Naive thymus-derived CD4-positive, alpha-beta T cell (primary cell): ENCODE measurements at regions of chr5 and their contacts with region 1.

Region 1: DNA sequence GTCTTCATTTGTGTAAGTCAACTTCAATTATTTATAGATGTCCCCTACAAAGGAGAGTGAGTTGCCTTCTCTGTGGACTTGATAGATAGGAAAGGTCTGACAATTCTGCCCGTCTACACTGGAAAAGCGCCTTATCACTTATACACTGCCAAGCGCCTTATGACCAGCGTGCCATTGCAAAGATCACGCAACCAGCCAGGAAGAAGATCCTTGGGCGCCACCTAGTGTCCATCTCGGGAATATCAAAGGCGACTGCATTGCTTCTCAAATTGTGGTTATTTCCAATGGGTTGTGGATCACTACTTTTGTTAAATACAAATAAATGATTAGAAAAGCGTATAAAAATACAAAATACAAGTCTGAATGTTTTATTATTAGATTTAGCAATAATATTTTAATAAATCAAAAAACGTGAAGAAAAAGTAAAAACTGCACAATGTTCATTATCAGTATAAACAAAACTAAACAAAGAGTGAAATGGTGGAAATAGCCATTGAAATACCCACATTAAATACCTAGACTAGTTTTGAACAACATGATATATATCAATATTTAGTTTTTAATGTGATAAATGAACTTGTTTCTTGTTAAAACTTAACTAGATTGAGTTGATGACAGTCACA is 27.8 kb downstream of the SUB1 start:
- DNase-seq: peak; percentile 55 to 84 (median 75)
- ATAC-seq: peak; percentile 92
- H3K4me3 ChIP-seq: no peak overlapping the region
- H3K4me3 Mint-ChIP-seq: no peak overlapping the region
- H3K27ac ChIP-seq: no peak overlapping the region
- H3K27ac Mint-ChIP-seq: peak overlapping the region in 2 of 9 donors; percentile 6 to 20
- H3K4me1 ChIP-seq: no peaks in the 10 kb centered on the region
- H3K4me1 Mint-ChIP-seq: peaks cover 3 to 14% (median 6%) of the 10 kb centered on the region in 7 donors
- H3K27me3 ChIP-seq: no peaks in the 10 kb centered on the region
- H3K27me3 Mint-ChIP-seq: no peaks in the 10 kb centered on the region

Region 2: GRCh38 chr5:32153723-32154122 is 459.4 kb before region 1 on chr5:
- CTCF ChIA-PET with region 1: no interaction called
- POLR2A ChIA-PET with region 1: no interaction called
- intact Hi-C with region 1: loop called in 1 of 2 experiments (anchors 10 kb)
- DNase-seq: no peak
- ATAC-seq: no peak
- H3K4me3 ChIP-seq: no peak overlapping the region
- H3K4me3 Mint-ChIP-seq: peak overlapping the region in 4 of 10 donors; percentile 17 to 45 (median 30)
- H3K27ac ChIP-seq: no peak overlapping the region
- H3K27ac Mint-ChIP-seq: no peak overlapping the region
- H3K4me1 ChIP-seq: peaks cover 12 to 15% of the 10 kb centered on the region in 2 donors
- H3K4me1 Mint-ChIP-seq: peaks cover 28 to 59% (median 49%) of the 10 kb centered on the region in 7 donors
- H3K27me3 ChIP-seq: no peaks in the 10 kb centered on the region
- H3K27me3 Mint-ChIP-seq: no peaks in the 10 kb centered on the region

Region 3: GRCh38 chr5:32232441-32233219 is 380.5 kb before region 1 on chr5:
- CTCF ChIA-PET with region 1: interaction called, 7 read pairs
- POLR2A ChIA-PET with region 1: no interaction called
- intact Hi-C with region 1: loop called (anchors 1 kb)
- DNase-seq: peak; percentile 45 to 73 (median 64)
- ATAC-seq: peak; percentile 88
- H3K4me3 ChIP-seq: no peak overlapping the region
- H3K4me3 Mint-ChIP-seq: no peak overlapping the region
- H3K27ac ChIP-seq: no peak overlapping the region
- H3K27ac Mint-ChIP-seq: peak overlapping the region; percentile 45 to 71 (median 62)
- H3K4me1 ChIP-seq: no peaks in the 10 kb centered on the region
- H3K4me1 Mint-ChIP-seq: peaks cover 0 to 12% (median 7%) of the 10 kb centered on the region in 7 donors
- H3K27me3 ChIP-seq: no peaks in the 10 kb centered on the region
- H3K27me3 Mint-ChIP-seq: no peaks in the 10 kb centered on the region

Region 4: DNA sequence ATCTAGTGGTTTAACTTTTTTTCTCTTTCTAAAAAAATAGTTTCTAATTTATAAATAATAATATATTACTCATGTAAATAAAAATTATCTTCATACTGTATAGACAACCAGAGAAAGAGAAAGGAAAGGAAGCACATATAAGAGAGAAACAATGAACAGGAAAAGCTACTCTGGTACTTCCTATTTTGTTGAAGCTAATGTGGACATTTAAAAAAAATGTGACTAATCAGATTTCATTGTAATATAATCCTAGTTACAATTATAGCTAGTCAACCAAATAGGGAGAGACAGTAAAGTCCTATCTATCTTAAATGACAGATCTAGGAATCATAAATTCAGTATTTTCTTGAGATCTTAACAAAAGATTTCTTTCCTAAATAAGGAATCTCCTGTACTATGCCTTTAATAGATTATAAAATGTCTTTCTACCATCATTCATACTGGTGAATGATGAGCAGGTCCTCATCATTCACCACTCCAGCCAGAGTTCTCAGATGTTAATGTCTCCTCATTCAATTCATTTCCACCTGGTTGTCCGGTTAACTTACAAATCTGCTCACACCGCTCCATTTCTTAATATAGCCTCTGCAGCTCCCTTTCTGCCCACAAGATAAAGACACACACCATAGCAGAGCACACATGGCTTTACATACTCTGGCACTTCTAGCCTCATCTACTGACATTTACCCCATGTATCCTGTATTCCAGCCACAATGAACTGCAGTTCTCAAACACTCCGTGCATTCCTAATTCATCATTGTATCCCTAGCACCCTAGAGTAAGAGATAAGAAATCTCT is 199.5 kb before region 1 on chr5:
- CTCF ChIA-PET with region 1: no interaction called
- POLR2A ChIA-PET with region 1: interaction called, 3 read pairs
- intact Hi-C with region 1: loop called in 1 of 2 experiments (anchors 5 kb)
- DNase-seq: no peak
- ATAC-seq: no peak
- H3K4me3 ChIP-seq: no peak overlapping the region
- H3K4me3 Mint-ChIP-seq: no peak overlapping the region
- H3K27ac ChIP-seq: no peak overlapping the region
- H3K27ac Mint-ChIP-seq: peak overlapping the region in 6 of 9 donors; percentile 5 to 53 (median 18)
- H3K4me1 ChIP-seq: no peaks in the 10 kb centered on the region
- H3K4me1 Mint-ChIP-seq: peaks cover under 1 to 32% (median 12%) of the 10 kb centered on the region in 7 donors
- H3K27me3 ChIP-seq: no peaks in the 10 kb centered on the region
- H3K27me3 Mint-ChIP-seq: no peaks in the 10 kb centered on the region

Region 5: GRCh38 chr5:32489791-32490582 is 123.2 kb before region 1 on chr5:
- CTCF ChIA-PET with region 1: interaction called, 39 read pairs
- POLR2A ChIA-PET with region 1: no interaction called
- intact Hi-C with region 1: loop called (anchors 1 kb)
- DNase-seq: peak; percentile 40 to 72 (median 64)
- ATAC-seq: peak; percentile 82
- H3K4me3 ChIP-seq: no peak overlapping the region
- H3K4me3 Mint-ChIP-seq: no peak overlapping the region
- H3K27ac ChIP-seq: no peak overlapping the region
- H3K27ac Mint-ChIP-seq: peak overlapping the region in 4 of 9 donors; percentile 11 to 56 (median 31)
- H3K4me1 ChIP-seq: no peaks in the 10 kb centered on the region
- H3K4me1 Mint-ChIP-seq: peaks cover 0 to 11% (median 7%) of the 10 kb centered on the region in 7 donors
- H3K27me3 ChIP-seq: no peaks in the 10 kb centered on the region
- H3K27me3 Mint-ChIP-seq: no peaks in the 10 kb centered on the region

Region 6: DNA sequence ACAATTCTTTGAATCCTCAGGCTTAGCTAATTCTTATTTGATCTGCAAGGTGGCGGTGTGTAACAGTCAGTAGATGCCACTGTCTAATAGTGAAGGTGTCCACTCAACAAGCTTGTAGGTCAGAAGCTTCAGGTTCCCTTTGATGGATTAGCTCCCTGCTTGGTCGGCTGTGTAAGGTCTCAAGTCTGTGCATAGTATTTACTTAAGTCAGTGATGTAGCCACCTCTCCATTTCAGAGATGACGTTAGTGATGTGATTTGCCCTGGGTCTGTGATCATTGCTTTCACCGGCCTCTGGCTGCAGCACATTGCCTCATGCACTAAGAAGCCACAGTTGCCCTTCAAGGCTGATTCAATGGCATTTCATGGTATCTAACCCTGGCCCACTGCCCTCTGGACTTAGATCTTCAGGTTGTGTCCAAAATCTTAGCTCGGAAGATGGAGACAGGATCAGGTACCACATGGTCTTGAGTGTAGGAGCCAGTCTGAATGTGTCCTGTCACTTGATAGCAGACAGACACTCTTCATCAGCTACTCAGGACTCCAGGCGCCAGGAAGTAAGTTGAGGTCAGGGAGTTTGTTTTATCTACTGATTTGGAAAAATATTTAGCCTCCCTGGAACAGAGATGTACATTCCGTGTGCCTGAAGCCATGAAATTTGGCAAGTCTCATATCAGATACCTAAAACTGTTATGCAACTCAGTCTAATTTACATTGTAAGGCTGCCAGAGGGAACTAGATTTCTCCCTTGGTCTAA is 15.1 kb after region 1 on chr5:
- CTCF ChIA-PET with region 1: no interaction called
- POLR2A ChIA-PET with region 1: no interaction called
- intact Hi-C with region 1: no loop called
- DNase-seq: no peak
- ATAC-seq: no peak
- H3K4me3 ChIP-seq: no peak overlapping the region
- H3K4me3 Mint-ChIP-seq: no peak overlapping the region
- H3K27ac ChIP-seq: no peak overlapping the region
- H3K27ac Mint-ChIP-seq: no peak overlapping the region
- H3K4me1 ChIP-seq: no peaks in the 10 kb centered on the region
- H3K4me1 Mint-ChIP-seq: no peaks in the 10 kb centered on the region
- H3K27me3 ChIP-seq: no peaks in the 10 kb centered on the region
- H3K27me3 Mint-ChIP-seq: peaks cover 0 to 6% (median 4%) of the 10 kb centered on the region in 5 donors

Region 7: DNA sequence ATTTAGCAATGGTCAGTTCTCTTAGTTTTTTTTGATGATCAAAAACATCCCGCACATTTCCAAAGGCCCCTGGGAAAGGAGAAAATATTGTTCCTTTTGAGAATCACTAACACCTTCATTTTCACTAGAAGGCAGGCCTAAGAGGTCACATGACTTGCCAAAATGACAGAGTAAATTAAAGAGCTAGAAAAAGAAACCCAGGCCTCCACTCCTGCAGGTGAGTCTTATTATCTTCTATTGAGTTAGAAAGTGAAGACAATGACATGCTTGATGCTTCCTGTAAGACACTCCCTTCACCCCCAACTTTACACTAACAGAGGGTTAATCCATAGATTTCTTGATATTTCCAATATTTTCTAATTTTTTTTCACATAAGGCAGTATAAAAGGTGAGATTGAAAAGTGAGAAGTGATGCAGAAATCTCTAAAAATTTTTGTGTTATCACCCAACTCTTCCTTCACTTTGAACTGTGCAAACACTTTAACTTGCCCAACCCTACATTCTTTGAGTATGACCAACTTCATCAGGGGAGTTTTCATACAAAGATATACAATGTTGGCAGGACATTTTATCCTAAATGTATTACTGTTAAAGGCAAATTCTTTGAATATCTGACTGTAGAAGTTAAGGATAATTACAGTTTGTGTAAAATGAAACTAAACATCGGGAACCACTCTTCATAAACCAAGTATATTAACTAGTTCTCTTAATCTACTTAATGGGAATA is 29.3 kb after region 1 on chr5:
- CTCF ChIA-PET with region 1: no interaction called
- POLR2A ChIA-PET with region 1: no interaction called
- intact Hi-C with region 1: no loop called
- DNase-seq: no peak
- ATAC-seq: no peak
- H3K4me3 ChIP-seq: no peak overlapping the region
- H3K4me3 Mint-ChIP-seq: no peak overlapping the region
- H3K27ac ChIP-seq: no peak overlapping the region
- H3K27ac Mint-ChIP-seq: peak overlapping the region in 1 of 9 donors; percentile 42
- H3K4me1 ChIP-seq: no peaks in the 10 kb centered on the region
- H3K4me1 Mint-ChIP-seq: peaks cover 0 to 7% (median 0%) of the 10 kb centered on the region in 7 donors
- H3K27me3 ChIP-seq: no peaks in the 10 kb centered on the region
- H3K27me3 Mint-ChIP-seq: peaks cover 0 to 5% (median 0%) of the 10 kb centered on the region in 5 donors

Region 8: GRCh38 chr5:32726086-32726557 is 113.0 kb after region 1 on chr5:
- CTCF ChIA-PET with region 1: no interaction called
- POLR2A ChIA-PET with region 1: no interaction called
- intact Hi-C with region 1: no loop called
- DNase-seq: no peak
- ATAC-seq: peak; percentile 57
- H3K4me3 ChIP-seq: no peak overlapping the region
- H3K4me3 Mint-ChIP-seq: no peak overlapping the region
- H3K27ac ChIP-seq: no peak overlapping the region
- H3K27ac Mint-ChIP-seq: no peak overlapping the region
- H3K4me1 ChIP-seq: no peaks in the 10 kb centered on the region
- H3K4me1 Mint-ChIP-seq: peaks cover 0 to 8% (median 0%) of the 10 kb centered on the region in 7 donors
- H3K27me3 ChIP-seq: peaks cover 0 to 2% of the 10 kb centered on the region in 2 donors
- H3K27me3 Mint-ChIP-seq: peaks cover 8 to 20% (median 9%) of the 10 kb centered on the region in 5 donors